PC-3 (cell line): ENCODE measurements at regions of chr1 and their contacts with region 1.

Region 1: DNA sequence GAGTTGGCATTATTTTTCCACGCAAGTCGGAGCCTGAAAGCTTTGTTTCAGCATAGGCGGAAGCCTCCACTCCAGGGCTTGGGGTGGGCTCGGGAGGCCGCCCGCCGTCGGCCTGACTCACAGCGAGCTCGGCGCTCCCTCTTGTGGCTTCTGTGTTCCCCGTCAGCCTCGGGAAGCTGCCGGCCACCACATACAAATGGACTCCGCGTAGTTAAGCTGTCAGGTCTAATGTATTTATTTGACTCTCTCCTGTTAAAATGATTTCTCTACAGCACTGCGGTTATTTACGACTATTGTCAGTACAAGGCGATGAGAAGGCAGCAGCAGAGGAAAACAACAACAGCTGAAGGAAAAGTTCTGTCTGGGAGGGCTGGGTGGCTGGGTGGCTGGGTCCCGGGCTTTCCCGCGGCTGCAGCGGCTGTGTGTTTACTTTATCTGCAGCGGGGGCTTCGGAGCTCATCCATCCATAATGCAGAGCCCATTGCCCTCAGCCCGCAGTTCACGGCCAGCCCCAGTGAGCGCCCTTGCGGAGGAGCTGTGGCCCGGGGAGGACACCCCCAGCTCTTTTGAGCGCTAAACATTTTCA is 375.7 kb upstream of the CAMK1G start:
- DNase-seq: peak; percentile 86
- ATAC-seq: peak; percentile 82
- H3K4me3 ChIP-seq: peak overlapping the region; percentile 66
- H3K27ac ChIP-seq: peak overlapping the region; percentile 26
- H3K4me1 ChIP-seq: peaks cover 25% of the 10 kb centered on the region
- H3K27me3 ChIP-seq: no peaks in the 10 kb centered on the region
- CTCF ChIP-seq: peak; percentile 98

Region 2: GRCh38 chr1:208652296-208653160 is 555.3 kb before region 1 on chr1:
- CTCF ChIA-PET with region 1: interaction called, 8 read pairs
- POLR2A ChIA-PET with region 1: no interaction called
- intact Hi-C with region 1: loop called (anchors 1 kb)
- DNase-seq: peak; percentile 89
- ATAC-seq: peak; percentile 90
- H3K4me3 ChIP-seq: no peak overlapping the region
- H3K27ac ChIP-seq: no peak overlapping the region
- H3K4me1 ChIP-seq: peaks cover 19% of the 10 kb centered on the region
- H3K27me3 ChIP-seq: no peaks in the 10 kb centered on the region
- CTCF ChIP-seq: peak; percentile 95

Region 3: DNA sequence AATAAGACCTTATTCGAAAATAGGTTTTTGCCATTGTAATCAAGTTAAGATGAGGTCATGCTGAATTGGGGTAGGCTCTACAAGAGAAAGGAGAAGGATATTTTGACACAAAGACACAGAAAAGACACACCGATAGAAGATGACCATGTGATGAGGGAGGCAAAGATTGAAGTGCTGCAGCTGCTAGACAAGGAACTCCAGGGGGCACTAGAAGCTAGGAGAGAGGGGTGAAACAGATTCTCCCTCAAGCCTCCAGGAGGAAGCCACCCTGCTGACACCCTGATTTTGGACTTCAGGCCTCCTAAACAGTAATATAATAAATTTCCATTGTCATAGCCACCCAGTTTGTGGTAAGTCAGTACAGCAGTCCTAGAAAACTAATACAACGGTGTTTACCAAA is 131.1 kb before region 1 on chr1:
- CTCF ChIA-PET with region 1: interaction called, 3 read pairs
- POLR2A ChIA-PET with region 1: no interaction called
- intact Hi-C with region 1: loop called (anchors 1 kb)
- DNase-seq: peak; percentile 67
- ATAC-seq: no peak
- H3K4me3 ChIP-seq: no peak overlapping the region
- H3K27ac ChIP-seq: no peak overlapping the region
- H3K4me1 ChIP-seq: peaks cover 43% of the 10 kb centered on the region
- H3K27me3 ChIP-seq: no peaks in the 10 kb centered on the region
- CTCF ChIP-seq: peak; percentile 86

Region 4: DNA sequence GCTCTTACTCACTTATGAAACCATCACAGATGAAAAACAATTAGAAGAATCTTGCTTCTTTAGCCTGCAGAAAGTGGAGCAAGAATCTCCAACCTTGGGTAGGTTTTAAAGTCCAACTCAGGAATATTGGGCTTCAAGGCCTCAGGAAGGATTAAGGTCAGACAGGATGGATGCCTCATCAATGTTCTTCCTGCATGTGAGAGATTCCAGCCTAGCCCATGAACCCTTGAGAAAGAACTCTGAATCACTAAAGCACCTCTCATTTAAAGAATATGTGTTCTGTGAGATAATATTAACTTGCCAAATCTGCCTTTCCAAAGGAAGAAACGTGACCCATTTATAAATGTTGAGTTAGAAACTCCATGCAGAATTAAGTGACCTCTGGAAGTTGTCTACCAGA is 30.6 kb after region 1 on chr1:
- CTCF ChIA-PET with region 1: no interaction called
- POLR2A ChIA-PET with region 1: no interaction called
- intact Hi-C with region 1: no loop called
- DNase-seq: no peak
- ATAC-seq: no peak
- H3K4me3 ChIP-seq: no peak overlapping the region
- H3K27ac ChIP-seq: no peak overlapping the region
- H3K4me1 ChIP-seq: no peaks in the 10 kb centered on the region
- H3K27me3 ChIP-seq: no peaks in the 10 kb centered on the region
- CTCF ChIP-seq: no peak

Region 5: GRCh38 chr1:209248649-209249279 is 41.0 kb after region 1 on chr1:
- CTCF ChIA-PET with region 1: interaction called, 35 read pairs
- POLR2A ChIA-PET with region 1: no interaction called
- intact Hi-C with region 1: loop called (anchors 1 kb)
- DNase-seq: peak; percentile 97
- ATAC-seq: peak; percentile 58
- H3K4me3 ChIP-seq: no peak overlapping the region
- H3K27ac ChIP-seq: no peak overlapping the region
- H3K4me1 ChIP-seq: peaks cover 44% of the 10 kb centered on the region
- H3K27me3 ChIP-seq: no peaks in the 10 kb centered on the region
- CTCF ChIP-seq: peak; percentile 98

Region 6: DNA sequence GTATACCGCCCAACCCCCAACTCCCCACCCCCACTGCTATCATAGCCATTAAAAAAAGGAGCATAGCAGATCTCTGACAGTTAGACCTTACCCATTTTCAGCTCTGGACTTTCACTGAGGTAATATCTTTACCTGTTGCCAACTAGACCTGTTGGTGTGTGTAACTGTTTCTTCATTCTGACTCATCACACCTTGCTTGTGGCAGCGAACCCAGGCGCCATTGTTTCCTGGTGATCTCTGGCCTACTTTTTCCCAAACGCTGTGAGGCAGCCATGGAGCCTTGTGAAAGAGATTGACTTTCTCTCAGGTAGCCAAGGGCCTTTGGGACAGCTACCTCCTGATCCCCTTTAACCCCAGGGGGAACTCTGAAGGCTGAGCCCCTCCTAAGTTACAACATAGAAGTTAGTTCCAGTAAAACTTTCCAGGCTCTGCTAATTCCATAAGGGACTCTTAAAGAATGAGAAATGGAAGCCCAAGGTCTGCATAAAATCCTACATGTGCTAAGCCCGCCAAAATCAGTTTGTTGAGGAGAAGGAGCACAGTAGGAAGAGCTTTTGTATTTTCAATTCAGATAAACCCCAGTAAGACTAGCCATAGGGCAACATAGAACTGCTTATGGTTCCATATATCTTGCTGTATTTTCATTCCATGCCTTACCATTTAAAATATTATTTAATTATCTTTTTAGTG is 179.6 kb after region 1 on chr1:
- CTCF ChIA-PET with region 1: interaction called, 10 read pairs
- POLR2A ChIA-PET with region 1: no interaction called
- intact Hi-C with region 1: no loop called
- DNase-seq: peak; percentile 95
- ATAC-seq: peak; percentile 9
- H3K4me3 ChIP-seq: no peak overlapping the region
- H3K27ac ChIP-seq: peak overlapping the region; percentile 81
- H3K4me1 ChIP-seq: peaks cover 69% of the 10 kb centered on the region
- H3K27me3 ChIP-seq: no peaks in the 10 kb centered on the region
- CTCF ChIP-seq: no peak

Region 7: GRCh38 chr1:209490013-209490412 is 282.2 kb after region 1 on chr1:
- CTCF ChIA-PET with region 1: interaction called, 5 read pairs
- POLR2A ChIA-PET with region 1: no interaction called
- intact Hi-C with region 1: loop called (anchors 2 kb)
- DNase-seq: peak; percentile 82
- ATAC-seq: peak; percentile 83
- H3K4me3 ChIP-seq: no peak overlapping the region
- H3K27ac ChIP-seq: no peak overlapping the region
- H3K4me1 ChIP-seq: peaks cover 14% of the 10 kb centered on the region; the same call in 1 of the 2 replicates
- H3K27me3 ChIP-seq: no peaks in the 10 kb centered on the region
- CTCF ChIP-seq: peak; percentile 94

Region 8: GRCh38 chr1:209565759-209566678 is 358.2 kb after region 1 on chr1:
- CTCF ChIA-PET with region 1: interaction called, 6 read pairs
- POLR2A ChIA-PET with region 1: no interaction called
- intact Hi-C with region 1: loop called (anchors 2 kb)
- DNase-seq: peak; percentile 97
- ATAC-seq: peak; percentile 90
- H3K4me3 ChIP-seq: no peak overlapping the region
- H3K27ac ChIP-seq: no peak overlapping the region
- H3K4me1 ChIP-seq: peaks cover 22% of the 10 kb centered on the region
- H3K27me3 ChIP-seq: no peaks in the 10 kb centered on the region
- CTCF ChIP-seq: peak; percentile 96